ENCODE measurements at regions of chr2 and their contacts with region 1.

Region 1: DNA sequence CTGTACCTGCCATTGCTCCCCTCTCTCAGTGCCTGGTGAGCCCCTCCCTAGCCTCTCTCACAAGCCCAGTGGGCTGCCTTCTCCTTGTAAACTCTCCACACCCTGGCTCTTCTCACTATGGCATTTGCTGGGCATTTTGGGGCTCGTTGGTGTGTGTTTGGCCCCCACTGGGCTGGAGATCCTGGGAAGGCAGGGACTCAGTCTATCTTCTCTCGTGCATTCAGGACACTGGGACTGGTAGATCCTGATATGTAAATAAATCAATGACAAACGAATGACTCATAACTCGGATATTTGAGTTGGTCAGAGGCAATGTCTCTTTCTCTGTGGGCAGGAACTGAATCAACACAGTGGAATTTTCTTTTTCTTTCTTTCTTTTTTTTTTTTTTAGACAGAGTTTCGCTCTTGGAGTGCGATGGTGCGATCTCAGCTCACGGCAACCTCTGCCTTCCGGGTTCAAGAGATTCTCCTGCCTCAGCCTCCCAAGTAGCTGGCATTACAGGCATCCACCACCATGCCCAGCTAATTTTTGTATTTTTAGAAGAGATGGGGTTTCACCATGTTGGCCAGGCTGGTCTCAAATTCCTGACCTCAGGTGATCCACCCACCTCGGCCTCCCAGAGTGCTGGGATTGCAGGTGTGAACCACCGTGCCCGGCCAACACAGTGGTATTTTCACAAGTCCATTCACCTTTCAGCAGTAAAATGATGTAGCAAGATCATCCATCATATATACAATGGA is 144.6 kb upstream of the SPRED2 start:
- DNase-seq: peak; percentile 14
- H3K4me3 Mint-ChIP-seq: peak overlapping the region; percentile 24
- H3K27ac Mint-ChIP-seq: peak overlapping the region; percentile 89
- H3K4me1 Mint-ChIP-seq: peaks cover 41% of the 10 kb centered on the region
- H3K27me3 Mint-ChIP-seq: no peaks in the 10 kb centered on the region
- CTCF ChIP-seq: no peak

Region 2: DNA sequence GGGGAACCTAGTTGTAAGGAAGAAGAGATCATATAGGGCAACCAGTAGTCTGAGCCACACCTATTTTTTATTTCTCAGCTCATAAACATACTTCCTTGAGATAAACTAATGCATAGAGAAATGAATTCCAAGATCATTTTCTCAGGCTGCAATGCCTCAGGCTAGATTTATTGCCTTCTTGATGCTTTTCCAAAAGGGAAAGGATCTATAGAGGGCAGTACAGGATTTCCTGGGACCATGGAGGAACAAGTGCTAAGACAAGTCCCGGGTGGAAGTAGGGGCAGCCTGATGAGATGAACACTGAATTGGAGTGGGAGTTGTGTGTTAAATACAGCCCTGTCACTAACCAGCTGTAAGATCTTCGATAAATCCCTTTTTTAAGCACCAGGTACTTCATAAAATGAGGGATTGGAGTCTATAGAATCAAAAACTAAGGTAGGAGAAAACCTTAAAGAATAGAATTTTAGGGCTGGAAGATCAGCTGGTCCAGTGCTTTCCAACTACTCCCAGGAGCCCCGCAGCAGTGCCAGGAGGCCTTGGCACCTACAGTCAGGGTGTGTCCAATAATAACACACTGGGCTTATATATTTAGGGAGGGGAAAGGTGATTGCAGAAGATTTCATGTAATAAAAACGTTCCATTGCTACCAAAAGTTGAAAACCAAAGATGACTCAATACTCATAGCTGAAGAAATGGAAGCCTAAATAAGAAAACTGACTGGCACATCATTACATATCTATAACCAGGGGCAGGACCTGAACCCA is 981.5 kb before region 1 on chr2:
- CTCF ChIA-PET with region 1: no interaction called
- intact Hi-C with region 1: loop called (anchors 5 kb)
- DNase-seq: no peak
- H3K4me3 Mint-ChIP-seq: no peak overlapping the region
- H3K27ac Mint-ChIP-seq: no peak overlapping the region
- H3K4me1 Mint-ChIP-seq: peaks cover 11% of the 10 kb centered on the region
- H3K27me3 Mint-ChIP-seq: no peaks in the 10 kb centered on the region
- CTCF ChIP-seq: no peak

Region 3: DNA sequence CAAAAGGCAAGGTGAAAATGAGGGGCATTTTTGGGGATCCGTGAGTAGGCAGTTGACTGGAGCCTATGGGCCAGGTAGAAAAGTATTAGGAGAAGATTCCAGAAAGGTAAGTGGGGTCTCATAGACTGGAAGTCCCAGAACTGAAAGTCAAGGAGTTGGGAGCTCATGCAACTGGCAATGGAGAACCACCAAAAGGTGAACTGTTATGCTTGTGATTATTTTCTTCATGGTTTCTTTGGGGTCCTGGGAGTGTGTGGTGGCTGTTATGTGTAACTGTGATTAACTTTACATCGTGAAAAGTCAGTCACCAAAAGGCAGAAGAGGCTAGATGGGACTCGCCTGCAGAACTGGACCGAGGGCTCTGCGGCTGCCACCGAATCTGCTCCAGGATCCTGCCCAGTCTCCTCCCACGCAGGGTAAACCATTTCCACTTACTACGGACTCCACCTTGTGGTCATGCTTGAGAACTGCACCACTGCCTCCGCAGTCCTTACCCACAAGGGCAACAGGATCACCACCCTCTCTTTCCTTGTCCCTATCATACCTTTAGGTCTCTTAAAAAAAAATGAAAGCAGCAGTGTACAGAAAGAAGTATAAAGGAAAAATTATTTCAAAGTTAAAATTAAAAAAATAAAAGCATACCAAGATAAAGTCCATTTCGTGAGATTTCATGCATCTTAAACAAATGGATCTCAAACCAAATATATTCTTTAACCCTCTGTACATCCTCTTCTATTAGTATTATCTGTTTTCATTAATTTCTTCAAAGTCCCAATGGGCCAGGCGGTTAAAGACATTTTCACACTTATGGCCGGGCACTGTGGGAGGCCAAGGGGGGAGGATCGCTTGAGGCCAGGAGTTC is 536.4 kb before region 1 on chr2:
- CTCF ChIA-PET with region 1: no interaction called
- intact Hi-C with region 1: loop called (anchors 5 kb)
- DNase-seq: peak; percentile 79
- H3K4me3 Mint-ChIP-seq: no peak overlapping the region
- H3K27ac Mint-ChIP-seq: no peak overlapping the region
- H3K4me1 Mint-ChIP-seq: peaks cover 7% of the 10 kb centered on the region
- H3K27me3 Mint-ChIP-seq: no peaks in the 10 kb centered on the region
- CTCF ChIP-seq: peak; percentile 93

Region 4: GRCh38 chr2:65264821-65265670 is 312.0 kb before region 1 on chr2:
- CTCF ChIA-PET with region 1: interaction called, 3 read pairs
- intact Hi-C with region 1: loop called (anchors 1 kb)
- DNase-seq: peak; percentile 43
- H3K4me3 Mint-ChIP-seq: no peak overlapping the region
- H3K27ac Mint-ChIP-seq: no peak overlapping the region
- H3K4me1 Mint-ChIP-seq: no peaks in the 10 kb centered on the region
- H3K27me3 Mint-ChIP-seq: no peaks in the 10 kb centered on the region
- CTCF ChIP-seq: peak; percentile 55

Measured in Calu3 (cell line).